Head of caudate nucleus (tissue), 42 donors: ENCODE measurements at regions of chr7 and their contacts with region 1.

Region 1: GRCh38 chr7:23597094-23598091 is at the start of gene CCDC126:
- DNase-seq: peak; percentile 79 to 97 (median 94)

Region 2: DNA sequence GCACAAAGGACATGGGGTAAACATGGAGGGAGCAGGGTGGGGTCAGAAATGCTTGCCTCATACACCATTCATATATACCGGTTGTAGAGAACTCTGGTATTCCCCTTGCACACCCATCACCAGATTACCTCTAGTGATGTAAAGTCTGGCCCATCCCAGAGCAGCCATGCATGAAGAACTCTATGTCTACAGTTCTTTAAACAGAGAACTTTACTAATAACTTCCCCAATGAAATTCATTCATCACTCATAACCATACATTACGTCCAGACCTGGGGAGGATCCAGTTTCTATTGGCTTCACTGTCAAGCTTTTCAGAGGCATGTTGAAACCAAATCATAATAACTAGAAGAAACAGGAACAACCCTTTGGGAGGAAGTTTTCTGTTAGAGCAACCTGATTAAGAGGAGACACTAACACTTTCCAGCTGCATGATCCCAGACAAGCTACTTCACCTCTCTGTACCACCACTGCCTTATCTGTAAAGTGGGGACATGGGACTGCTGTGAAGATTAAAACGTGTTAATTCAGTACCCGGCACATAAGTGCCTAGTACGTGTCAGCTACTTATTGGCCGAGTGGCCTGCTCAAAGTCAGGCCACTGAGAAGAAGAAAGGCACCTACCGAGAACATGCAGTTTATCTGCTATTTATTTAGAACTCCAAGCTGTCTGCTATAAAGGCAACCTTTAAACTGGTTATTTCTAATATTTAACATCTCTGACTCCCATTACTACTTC is 186.8 kb before region 1 on chr7:
- intact Hi-C with region 1: no loop called
- DNase-seq: no peak

Region 3: GRCh38 chr7:23546897-23547572 is 50.4 kb before region 1 on chr7:
- intact Hi-C with region 1: loop called (anchors 10 kb)
- DNase-seq: peak; percentile 43 to 91 (median 80)

Region 4: GRCh38 chr7:23654508-23654907 is 57.1 kb after region 1 on chr7:
- intact Hi-C with region 1: no loop called
- DNase-seq: peak in 31 of 42 donors; percentile 15 to 86 (median 47)

Region 5: GRCh38 chr7:23679898-23680413 is 82.6 kb after region 1 on chr7 and contains the start of gene FAM221A:
- intact Hi-C with region 1: loop called (anchors 10 kb)
- DNase-seq: peak; percentile 77 to 97 (median 93)